Gastrocnemius medialis (tissue), 4 donors: ENCODE measurements at regions of chr17 and their contacts with region 1.

Region 1: GRCh38 chr17:3668279-3669085 is at the starts of genes EMC6 and TAX1BP3:
- DNase-seq: peak; percentile 98
- ATAC-seq: peak; percentile 80 to 89
- H3K4me3 ChIP-seq: peak within 1 kb of the TSS; percentile 80 to 100 (median 95)
- H3K27ac ChIP-seq: peak within 1 kb of the TSS; percentile 93 to 97 (median 96)
- H3K4me1 ChIP-seq: peaks cover 36 to 37% of the 10 kb centered on the region in 2 donors
- H3K27me3 ChIP-seq: no peaks in the 10 kb centered on the region
- CTCF ChIP-seq: no peak
- POLR2A ChIP-seq: peak; percentile 95 to 99
- total RNA-seq, gene EMC6: 40.6 to 73.8 (median 54.5) TPM
- total RNA-seq, gene TAX1BP3: 24.1 to 45.1 (median 33.8) TPM

Region 2: DNA sequence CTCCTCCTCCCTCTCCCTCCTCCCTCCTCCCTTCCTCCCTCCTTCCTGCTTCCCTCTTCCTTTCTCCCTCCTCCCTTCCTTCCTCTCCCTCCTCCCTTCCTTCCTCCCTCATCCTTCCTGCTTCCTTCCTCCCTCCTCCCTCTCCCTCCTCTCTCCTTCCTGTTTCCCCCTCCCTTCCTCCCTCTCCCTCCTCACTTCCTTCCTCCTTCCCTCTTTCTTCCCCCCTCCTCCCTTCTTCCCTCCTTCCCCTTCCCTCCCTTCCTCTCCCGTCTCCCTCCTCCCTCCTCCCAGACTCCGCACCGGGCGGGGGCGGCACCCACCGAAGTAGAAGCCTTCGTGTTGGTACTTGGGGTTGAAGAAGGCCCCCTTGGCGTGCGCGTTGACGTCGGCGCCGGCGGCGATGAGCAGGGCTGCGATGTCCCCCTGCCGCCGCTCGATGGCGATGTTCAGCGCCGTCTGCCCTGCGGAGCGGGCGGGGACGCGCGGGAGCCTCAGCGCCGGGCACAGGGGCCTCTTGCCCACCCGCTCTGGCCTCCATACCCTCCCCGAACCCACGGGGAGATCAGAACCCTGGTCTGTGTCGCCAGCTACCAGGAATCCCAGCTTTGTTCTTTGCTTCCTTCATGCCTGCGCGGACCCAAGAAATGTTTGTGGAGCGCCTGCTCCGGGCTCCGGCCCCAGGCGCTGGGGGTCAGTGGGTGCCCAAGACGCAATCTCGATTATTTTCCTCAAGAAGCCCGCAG is 133.1 kb before region 1 on chr17:
- in situ Hi-C with region 1: no loop called
- intact Hi-C with region 1: loop called (anchors 10 kb)
- DNase-seq: peak; percentile 14 to 35
- ATAC-seq: peak; percentile 62 to 77
- H3K4me3 ChIP-seq: peak overlapping the region; percentile 45 to 62 (median 52)
- H3K27ac ChIP-seq: peak overlapping the region; percentile 38 to 70 (median 60)
- H3K4me1 ChIP-seq: peaks cover 0 to 2% of the 10 kb centered on the region in 2 donors
- H3K27me3 ChIP-seq: no peaks in the 10 kb centered on the region
- CTCF ChIP-seq: peak; percentile 46 to 77 (median 70)
- POLR2A ChIP-seq: no peak

Region 3: DNA sequence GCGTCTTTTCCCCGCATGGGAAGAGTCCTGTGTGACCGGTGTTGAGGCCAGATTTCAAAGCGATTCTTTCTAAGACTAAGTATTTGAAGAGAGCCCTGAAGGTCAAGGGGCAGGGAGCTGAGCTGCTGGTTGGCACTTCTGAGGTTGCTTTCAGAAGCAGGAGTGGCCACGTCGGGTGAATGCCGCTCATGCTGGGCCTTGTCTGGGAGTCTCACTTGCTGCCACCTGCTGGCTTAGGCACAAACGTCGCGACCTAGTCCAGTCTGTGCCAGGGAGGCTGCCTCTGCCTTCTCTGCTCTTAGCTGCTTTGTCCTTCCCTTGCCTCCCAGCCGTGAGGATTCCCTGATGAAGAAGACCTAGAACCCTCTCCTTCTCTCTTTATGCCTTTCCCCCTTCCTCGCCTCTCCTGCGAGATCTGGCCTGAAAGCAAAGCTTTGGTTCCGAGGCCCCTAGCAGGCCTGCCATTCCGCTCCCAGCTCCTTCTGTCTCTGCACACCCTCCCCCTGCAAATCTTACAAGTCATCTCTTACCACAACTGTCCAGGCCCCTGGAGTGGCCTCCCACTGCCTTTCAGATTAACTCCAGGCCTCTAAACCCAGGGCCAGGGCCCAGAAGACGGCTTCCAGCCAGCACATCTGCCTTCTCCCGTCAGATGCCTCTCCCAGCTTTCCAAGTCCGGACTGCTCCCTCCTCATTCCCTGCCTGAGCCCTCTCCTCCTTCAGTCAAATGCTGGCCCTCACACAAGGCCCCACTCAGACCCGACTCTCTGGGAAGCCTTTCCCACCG is 20.5 kb before region 1 on chr17:
- in situ Hi-C with region 1: no loop called
- intact Hi-C with region 1: no loop called
- DNase-seq: peak in 1 of 2 donors; percentile 50
- ATAC-seq: peak; percentile 61 to 72
- H3K4me3 ChIP-seq: no peak overlapping the region
- H3K27ac ChIP-seq: no peak overlapping the region
- H3K4me1 ChIP-seq: no peaks in the 10 kb centered on the region
- H3K27me3 ChIP-seq: no peaks in the 10 kb centered on the region
- CTCF ChIP-seq: peak in 3 of 5 experiments; percentile 18 to 47 (median 38)
- POLR2A ChIP-seq: no peak

Region 4: GRCh38 chr17:3718201-3718600 is 49.7 kb after region 1 on chr17:
- in situ Hi-C with region 1: loop called in 1 of 4 experiments (anchors 5 kb)
- intact Hi-C with region 1: no loop called
- DNase-seq: no peak
- ATAC-seq: no peak
- H3K4me3 ChIP-seq: no peak overlapping the region
- H3K27ac ChIP-seq: peak overlapping the region in 1 of 4 donors; percentile 63
- H3K4me1 ChIP-seq: peaks cover 8 to 22% of the 10 kb centered on the region in 2 donors
- H3K27me3 ChIP-seq: no peaks in the 10 kb centered on the region
- CTCF ChIP-seq: no peak
- POLR2A ChIP-seq: no peak